ENCODE measurements at regions of chr14 and their contacts with region 1.

Region 1: GRCh38 chr14:91164685-91165084 is 50.8 kb downstream of the DGLUCY start:
- DNase-seq: peak; percentile 72 to 78
- ATAC-seq: peak; percentile 14 to 75 (median 60)
- H3K4me3 ChIP-seq: no peak overlapping the region
- H3K27ac ChIP-seq: peak overlapping the region; percentile 81
- H3K4me1 ChIP-seq: peaks cover 58% of the 10 kb centered on the region
- H3K27me3 ChIP-seq: no peaks in the 10 kb centered on the region
- CTCF ChIP-seq: no peak

Region 2: DNA sequence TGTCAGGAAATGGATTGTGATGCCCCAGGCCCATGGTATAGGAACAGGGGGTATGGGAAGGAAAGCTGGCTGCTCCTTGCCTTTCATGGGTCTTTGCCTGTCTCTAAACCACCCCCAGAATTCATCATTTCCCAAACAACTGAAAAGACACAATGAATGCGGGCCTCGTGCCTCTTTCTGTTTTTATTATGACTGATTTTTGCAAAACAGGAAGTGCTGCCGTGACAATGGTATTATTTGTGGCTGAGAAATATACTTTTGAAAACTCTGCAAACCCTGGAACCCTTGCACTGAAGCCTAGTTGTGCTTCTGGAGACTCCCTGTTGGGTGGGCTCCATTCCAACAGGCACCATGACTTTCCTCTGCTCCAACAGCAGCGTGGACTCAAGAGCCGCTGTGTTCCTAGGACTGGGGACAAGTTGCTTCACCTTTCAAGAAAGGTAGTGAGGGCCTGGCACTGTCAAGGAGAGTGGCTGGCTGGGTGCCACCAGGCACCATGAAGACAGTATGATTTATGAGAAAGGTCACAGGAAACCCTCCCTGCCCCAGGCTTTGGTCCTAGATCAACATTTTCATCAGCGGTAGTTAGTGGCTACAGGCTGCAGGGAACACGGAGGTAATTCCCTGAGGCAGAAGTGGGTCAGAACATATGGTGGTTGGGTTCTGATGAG is 55.6 kb before region 1 on chr14:
- intact Hi-C with region 1: no loop called
- DNase-seq: peak in 1 of 2 donors; percentile 67
- ATAC-seq: peak in 2 of 4 donors; percentile 38 to 51
- H3K4me3 ChIP-seq: no peak overlapping the region
- H3K27ac ChIP-seq: peak overlapping the region; percentile 27
- H3K4me1 ChIP-seq: peaks cover 10% of the 10 kb centered on the region
- H3K27me3 ChIP-seq: no peaks in the 10 kb centered on the region
- CTCF ChIP-seq: no peak

Region 3: GRCh38 chr14:91119556-91120311 is 45.0 kb before region 1 on chr14:
- intact Hi-C with region 1: loop called (anchors 5 kb)
- DNase-seq: peak; percentile 65 to 80
- ATAC-seq: peak; percentile 92 to 96 (median 94)
- H3K4me3 ChIP-seq: no peak overlapping the region
- H3K27ac ChIP-seq: peak overlapping the region; percentile 90
- H3K4me1 ChIP-seq: peaks cover 72% of the 10 kb centered on the region
- H3K27me3 ChIP-seq: no peaks in the 10 kb centered on the region
- CTCF ChIP-seq: no peak

Region 4: DNA sequence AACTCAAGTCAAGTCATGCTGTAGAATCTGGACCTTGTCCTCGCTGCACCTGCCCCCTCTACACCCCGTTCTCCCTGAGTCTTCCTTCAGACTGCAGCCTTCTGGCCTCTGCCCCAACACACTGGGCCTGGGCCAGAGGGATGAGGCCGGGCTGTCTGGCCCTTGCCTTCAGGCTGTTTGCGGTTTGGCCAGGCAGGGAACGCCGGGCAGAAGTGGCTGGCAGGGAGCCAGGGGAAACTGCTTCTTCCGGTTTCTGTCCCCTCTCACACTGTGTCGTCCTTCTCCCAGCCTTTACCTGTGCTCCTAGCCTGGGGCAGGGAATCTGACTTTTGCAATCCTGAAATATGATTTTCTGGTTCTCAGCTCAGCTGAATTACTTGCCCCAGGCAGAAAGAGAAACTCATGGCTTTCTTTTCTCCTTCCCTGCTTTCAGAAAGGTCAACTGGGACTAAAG is 37.3 kb before region 1 on chr14:
- intact Hi-C with region 1: loop called (anchors 5 kb)
- DNase-seq: peak; percentile 84 to 91
- ATAC-seq: peak; percentile 80 to 94 (median 92)
- H3K4me3 ChIP-seq: no peak overlapping the region
- H3K27ac ChIP-seq: peak overlapping the region; percentile 90
- H3K4me1 ChIP-seq: peaks cover 59% of the 10 kb centered on the region
- H3K27me3 ChIP-seq: no peaks in the 10 kb centered on the region
- CTCF ChIP-seq: no peak

Measured in psoas muscle (tissue), 8 donors.